RWPE1 (cell line): ENCODE measurements at regions of chr6 and their contacts with region 1.

Region 1: DNA sequence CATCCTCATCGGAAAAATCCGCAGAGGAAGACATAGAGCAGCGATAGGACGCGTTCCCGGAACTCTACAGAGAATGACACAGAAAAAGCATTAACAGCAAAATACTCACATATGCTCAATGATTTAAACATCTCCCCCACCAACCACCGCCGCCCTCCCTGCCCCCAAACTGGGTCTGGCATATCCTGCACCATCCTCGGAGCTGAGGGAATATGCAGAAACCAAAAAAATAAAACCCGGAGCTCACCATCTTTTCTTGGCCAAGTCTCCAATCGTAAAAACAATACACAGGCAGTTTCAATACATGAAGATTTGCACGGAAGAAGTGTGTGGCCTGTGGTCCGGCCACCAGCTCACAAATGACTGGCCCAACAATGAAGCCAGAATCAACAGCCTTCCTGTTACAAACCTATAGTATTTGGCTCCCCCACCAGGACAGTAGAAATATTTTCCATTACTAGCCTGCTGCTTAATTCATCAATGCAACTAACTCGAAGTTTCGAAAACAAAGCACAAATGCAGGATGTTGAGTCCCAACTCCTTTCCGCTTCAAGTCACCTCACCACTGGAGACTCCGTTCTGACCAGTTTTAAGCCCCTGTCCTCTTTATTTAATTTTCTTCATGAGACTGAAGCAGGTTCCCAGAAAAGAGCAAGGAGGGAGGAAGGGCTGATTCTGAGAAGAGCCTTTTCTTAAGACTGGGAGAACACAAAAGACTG is 103.2 kb upstream of the BEND6 start:
- DNase-seq: peak; percentile 51
- H3K27ac ChIP-seq: no peak overlapping the region
- CTCF ChIP-seq: peak; percentile 72

Region 2: GRCh38 chr6:56708810-56709597 is 142.7 kb before region 1 on chr6:
- CTCF ChIA-PET with region 1: interaction called, 10 read pairs
- POLR2A ChIA-PET with region 1: no interaction called
- DNase-seq: peak; percentile 66
- H3K27ac ChIP-seq: no peak overlapping the region
- CTCF ChIP-seq: peak; percentile 69